Activated T-helper 1 cell treated with anti-CD3 and anti-CD28 coated beads, Interleukin-12 subunit alpha, Interleukin-12 subunit beta, Interleukin-2, Interleukin-4 antibody, amounts not matched to agents 30 ng/mL and 10 ng/mL and 1 ng/mL, durations not matched to agents 14 hours and 24 hours and 36 hours (primary cell): ENCODE measurements at regions of chr7 and their contacts with region 1.

Region 1: DNA sequence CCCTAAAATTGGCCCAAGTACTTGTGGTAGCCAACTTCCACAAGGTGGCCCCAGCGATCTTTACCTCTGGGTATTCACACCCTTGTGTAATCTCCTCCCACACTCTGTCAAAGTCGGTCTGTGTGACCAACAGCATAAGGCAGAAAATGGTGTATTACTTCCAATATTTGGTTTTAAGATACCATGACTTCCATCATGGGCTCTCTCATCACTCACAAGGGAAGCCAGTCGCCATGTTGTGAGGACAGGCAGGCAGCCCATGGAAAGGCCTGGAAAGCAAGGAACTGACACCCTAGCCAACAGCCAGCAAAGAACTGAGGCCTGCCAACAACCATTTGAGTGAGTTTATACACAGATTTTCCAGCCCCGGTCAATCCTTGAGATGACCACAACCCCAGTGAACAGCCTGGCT is 91.0 kb upstream of the KMT2E start:
- DNase-seq: peak; percentile 64
- H3K4me3 Mint-ChIP-seq: no peak overlapping the region
- H3K27ac Mint-ChIP-seq: no peak overlapping the region
- H3K4me1 Mint-ChIP-seq: peaks cover 7% of the 10 kb centered on the region
- H3K27me3 Mint-ChIP-seq: peaks cover 11% of the 10 kb centered on the region

Region 2: DNA sequence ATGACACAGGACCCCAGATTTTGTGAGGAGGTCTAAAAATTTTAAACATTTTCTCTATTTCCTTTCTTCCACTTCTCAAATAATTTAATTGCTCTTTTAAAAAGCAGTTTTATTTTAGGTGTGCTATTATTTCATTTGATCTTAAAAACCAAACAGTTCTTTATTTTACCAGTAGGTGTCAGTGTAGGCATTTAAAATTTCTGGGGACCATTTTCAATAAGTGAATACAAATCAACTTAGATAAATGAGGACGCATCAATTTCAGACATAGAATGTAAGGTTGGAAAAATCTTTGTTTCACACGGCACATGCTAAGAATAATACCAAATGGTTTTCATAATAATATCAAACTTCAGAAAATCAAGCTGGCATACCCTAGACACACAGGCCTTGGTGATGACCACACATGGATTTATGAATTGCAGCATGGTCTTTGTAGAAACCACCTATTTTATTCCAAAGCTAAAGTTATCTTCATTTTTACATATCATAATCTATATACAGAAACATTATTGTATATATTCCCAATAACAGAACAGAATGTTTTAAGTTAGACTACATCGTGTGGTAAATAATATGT is 1349.4 kb before region 1 on chr7:
- intact Hi-C with region 1: loop called (anchors 5 kb)
- DNase-seq: no peak
- H3K4me3 Mint-ChIP-seq: no peak overlapping the region
- H3K27ac Mint-ChIP-seq: no peak overlapping the region
- H3K4me1 Mint-ChIP-seq: no peaks in the 10 kb centered on the region
- H3K27me3 Mint-ChIP-seq: peaks cover 2% of the 10 kb centered on the region

Region 3: GRCh38 chr7:104873346-104873849 is 49.6 kb before region 1 on chr7:
- intact Hi-C with region 1: no loop called
- DNase-seq: no peak
- H3K4me3 Mint-ChIP-seq: no peak overlapping the region
- H3K27ac Mint-ChIP-seq: no peak overlapping the region
- H3K4me1 Mint-ChIP-seq: peaks cover 3% of the 10 kb centered on the region
- H3K27me3 Mint-ChIP-seq: peaks cover 4% of the 10 kb centered on the region

Region 4: DNA sequence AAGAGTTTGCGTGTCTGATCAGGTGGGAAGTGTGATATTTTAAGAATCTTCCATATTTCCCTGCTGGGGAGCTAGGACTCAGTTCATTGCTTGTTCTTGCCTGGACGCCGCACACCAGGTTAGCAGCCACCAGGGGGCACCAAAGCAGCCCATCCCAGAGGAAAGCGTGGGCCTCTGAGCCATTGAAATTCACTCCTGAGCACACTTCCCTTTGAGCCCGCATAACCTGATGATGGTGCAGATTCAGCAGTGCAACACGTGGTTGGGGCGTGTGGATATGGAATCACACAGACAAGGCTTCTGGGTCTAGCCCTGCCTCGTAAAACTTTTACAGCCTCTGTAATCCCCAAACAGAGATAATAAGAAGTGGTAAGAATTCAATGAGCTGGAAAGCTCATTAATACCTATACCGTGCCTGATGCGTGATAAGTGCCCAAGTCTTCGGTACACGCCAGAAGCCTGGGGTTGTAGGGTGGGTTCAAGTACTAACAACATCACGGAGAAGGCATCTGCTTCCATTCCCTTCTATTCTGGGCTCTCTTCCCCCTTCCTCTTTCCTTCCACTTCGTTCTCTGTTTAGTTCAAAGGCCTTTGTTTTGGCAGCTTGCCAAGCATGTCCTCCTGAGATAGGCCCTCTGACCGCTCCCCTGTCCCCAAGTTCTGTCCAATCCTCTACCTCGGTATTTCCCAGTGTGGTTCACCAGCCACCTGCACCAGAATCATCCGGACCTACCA is 39.1 kb before region 1 on chr7:
- intact Hi-C with region 1: loop called (anchors 1 kb)
- DNase-seq: peak; percentile 55
- H3K4me3 Mint-ChIP-seq: no peak overlapping the region
- H3K27ac Mint-ChIP-seq: no peak overlapping the region
- H3K4me1 Mint-ChIP-seq: peaks cover 19% of the 10 kb centered on the region
- H3K27me3 Mint-ChIP-seq: peaks cover 10% of the 10 kb centered on the region

Region 5: GRCh38 chr7:104983578-104984539 is 60.8 kb after region 1 on chr7:
- intact Hi-C with region 1: loop called (anchors 1 kb)
- DNase-seq: peak; percentile 82
- H3K4me3 Mint-ChIP-seq: peak overlapping the region; percentile 99
- H3K27ac Mint-ChIP-seq: peak overlapping the region; percentile 100
- H3K4me1 Mint-ChIP-seq: peaks cover 76% of the 10 kb centered on the region
- H3K27me3 Mint-ChIP-seq: no peaks in the 10 kb centered on the region

Region 6: DNA sequence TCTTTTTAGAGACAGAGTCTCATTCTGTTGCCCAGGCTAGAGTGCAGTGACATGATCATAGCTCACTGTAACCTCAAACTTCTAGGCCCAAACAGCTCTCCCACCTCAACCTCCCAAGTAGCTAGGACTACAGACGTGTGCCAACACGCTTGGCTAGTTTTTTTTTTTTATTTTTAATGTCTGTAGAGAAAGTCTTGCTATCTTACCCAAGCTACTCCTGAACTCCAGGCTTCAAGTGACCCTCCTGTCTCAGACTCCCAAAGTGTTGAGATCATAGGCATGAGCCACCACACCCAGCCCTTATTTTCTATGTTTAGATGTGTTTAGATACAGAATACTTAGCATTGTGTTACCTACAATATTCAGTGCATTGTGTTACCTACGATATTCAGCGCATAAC is 137.4 kb after region 1 on chr7:
- intact Hi-C with region 1: loop called (anchors 5 kb)
- DNase-seq: no peak
- H3K4me3 Mint-ChIP-seq: no peak overlapping the region
- H3K27ac Mint-ChIP-seq: no peak overlapping the region
- H3K4me1 Mint-ChIP-seq: peaks cover 61% of the 10 kb centered on the region
- H3K27me3 Mint-ChIP-seq: no peaks in the 10 kb centered on the region

Region 7: DNA sequence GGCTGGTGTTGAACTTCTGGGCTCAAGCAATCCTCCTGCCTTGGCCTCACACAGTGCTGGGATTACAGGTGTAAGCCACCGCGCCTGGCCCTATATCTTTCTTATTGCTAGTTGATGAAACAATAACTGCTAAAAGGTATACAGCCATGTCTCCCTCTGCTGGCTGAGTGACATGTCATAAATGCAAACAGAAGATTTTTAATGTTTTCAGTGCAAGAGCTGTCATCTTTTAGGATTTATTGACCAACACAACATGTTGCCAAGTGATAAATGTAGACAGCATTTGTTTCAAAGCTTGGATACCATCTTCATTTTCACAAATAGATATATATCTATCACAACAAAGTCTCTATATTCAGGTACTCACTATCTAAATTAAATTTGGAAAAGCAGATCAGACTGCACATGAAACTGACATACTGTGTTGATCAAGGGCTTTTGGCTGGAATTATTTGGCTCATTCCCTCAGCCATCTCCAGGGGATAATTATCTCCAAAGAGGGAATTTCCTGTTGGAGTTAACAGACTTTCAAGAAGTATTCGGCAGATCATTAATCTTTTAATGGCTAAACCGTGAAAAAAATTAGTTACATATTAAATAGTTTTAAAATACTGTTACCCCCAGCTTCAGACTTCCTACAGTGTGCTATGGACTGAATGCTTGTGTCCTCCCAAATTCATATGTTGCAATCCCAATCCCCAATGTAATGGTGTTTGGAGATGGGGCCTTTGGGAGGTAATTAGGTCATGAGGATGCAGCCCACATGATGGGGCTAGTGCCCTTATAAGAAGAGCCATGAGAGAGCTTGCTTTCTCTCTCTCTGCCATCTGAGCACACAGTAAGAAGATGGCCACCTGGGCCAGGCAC is 507.0 kb after region 1 on chr7:
- intact Hi-C with region 1: loop called (anchors 2 kb)
- DNase-seq: peak; percentile 19
- H3K4me3 Mint-ChIP-seq: no peak overlapping the region
- H3K27ac Mint-ChIP-seq: no peak overlapping the region
- H3K4me1 Mint-ChIP-seq: peaks cover 12% of the 10 kb centered on the region
- H3K27me3 Mint-ChIP-seq: no peaks in the 10 kb centered on the region